Panc1 (cell line): ENCODE measurements at regions of chr1 and their contacts with region 1.

Region 1: GRCh38 chr1:1996207-1996651 is 7.4 kb downstream of the CFAP74 start:
- DNase-seq: no peak
- ATAC-seq: no peak
- H3K4me3 ChIP-seq: no peak overlapping the region
- H3K27ac ChIP-seq: no peak overlapping the region
- H3K4me1 ChIP-seq: no peaks in the 10 kb centered on the region
- H3K27me3 ChIP-seq: no peaks in the 10 kb centered on the region
- CTCF ChIP-seq: no peak

Region 2: DNA sequence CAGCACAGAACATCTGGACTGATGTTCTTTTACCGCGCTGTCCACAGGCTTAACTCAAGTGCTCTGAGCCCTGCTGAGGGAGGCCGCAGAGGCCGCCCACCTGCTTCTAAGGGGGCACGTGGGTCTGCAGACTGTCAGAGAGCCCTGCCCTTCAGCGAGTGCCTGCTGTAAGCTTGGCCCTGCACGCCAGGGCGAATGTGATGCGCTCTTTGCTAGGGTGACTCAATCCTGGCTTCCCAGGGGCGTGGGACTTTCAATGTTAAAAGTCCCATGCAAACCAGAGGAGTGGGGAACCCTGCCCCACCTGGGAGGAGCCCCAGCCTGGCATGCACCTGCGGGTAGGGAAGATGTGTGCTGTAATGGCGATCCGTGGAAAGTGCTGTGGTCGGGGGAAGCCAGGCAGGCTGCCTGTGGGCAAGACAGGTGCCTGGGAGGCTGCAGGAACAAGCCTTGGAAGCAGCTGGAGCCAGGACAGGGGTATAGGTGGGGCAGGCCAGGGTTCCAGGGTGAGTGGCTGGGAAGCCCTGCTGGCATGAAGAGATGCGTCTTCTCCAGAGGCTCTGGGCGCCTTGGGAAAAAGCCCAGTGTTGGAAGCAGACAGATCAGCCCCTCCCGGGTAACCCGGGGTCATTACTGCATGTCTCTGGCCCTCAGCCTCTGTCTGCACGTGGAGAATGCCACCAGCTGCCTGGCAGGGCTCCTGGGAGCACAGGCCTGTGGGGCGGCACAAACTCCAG is 530.8 kb after region 1 on chr1:
- CTCF ChIA-PET with region 1: no interaction called
- POLR2A ChIA-PET with region 1: interaction called, 10 read pairs
- in situ Hi-C with region 1: no loop called
- intact Hi-C with region 1: no loop called
- DNase-seq: no peak
- ATAC-seq: peak; percentile 5
- H3K4me3 ChIP-seq: peak overlapping the region; percentile 9 to 32; a peak in 2 of 4 replicates
- H3K27ac ChIP-seq: 0 out of 2 replicates have a peak overlapping the region, but pooled peaks have one; percentile 57
- H3K4me1 ChIP-seq: peaks cover 50% of the 10 kb centered on the region
- H3K27me3 ChIP-seq: no peaks in the 10 kb centered on the region
- CTCF ChIP-seq: no peak